ENCODE measurements at regions of chr3 and their contacts with region 1.

Region 1: DNA sequence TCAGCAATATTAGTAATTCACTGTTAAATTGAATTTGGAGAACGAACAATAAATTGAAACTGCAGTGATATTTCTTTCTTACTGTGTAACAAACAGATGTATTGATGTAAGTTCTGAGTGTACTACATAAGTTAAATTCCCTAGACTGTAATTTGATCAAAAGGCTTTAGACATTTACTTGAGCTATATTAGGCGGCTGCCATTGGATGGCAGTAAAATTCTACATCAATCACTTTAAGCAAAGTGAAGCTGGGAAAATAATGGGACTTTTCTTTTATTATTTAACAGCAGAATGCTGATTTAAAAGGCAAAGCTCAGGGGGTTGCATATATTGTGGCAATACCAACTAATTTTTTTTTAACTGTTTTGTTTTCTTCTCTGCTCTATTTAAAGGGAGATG is 212.6 kb upstream of the PLSCR5 start:
- DNase-seq: no peak
- ATAC-seq: no peak
- H3K4me3 ChIP-seq: no peak overlapping the region
- H3K27ac ChIP-seq: no peak overlapping the region
- H3K4me1 ChIP-seq: no peaks in the 10 kb centered on the region
- H3K27me3 ChIP-seq: no peaks in the 10 kb centered on the region
- CTCF ChIP-seq: peak in 2 of 5 experiments; percentile 33 to 41
- POLR2A ChIP-seq: no peak

Region 2: GRCh38 chr3:145639875-145640274 is 1177.8 kb before region 1 on chr3:
- in situ Hi-C with region 1: no loop called
- intact Hi-C with region 1: no loop called
- DNase-seq: no peak
- ATAC-seq: no peak
- H3K4me3 ChIP-seq: no peak overlapping the region
- H3K27ac ChIP-seq: no peak overlapping the region
- H3K4me1 ChIP-seq: no peaks in the 10 kb centered on the region
- H3K27me3 ChIP-seq: no peaks in the 10 kb centered on the region
- CTCF ChIP-seq: no peak
- POLR2A ChIP-seq: no peak

Region 3: GRCh38 chr3:146839733-146840375 is 22.1 kb after region 1 on chr3:
- in situ Hi-C with region 1: no loop called
- intact Hi-C with region 1: no loop called
- DNase-seq: no peak
- ATAC-seq: no peak
- H3K4me3 ChIP-seq: no peak overlapping the region
- H3K27ac ChIP-seq: no peak overlapping the region
- H3K4me1 ChIP-seq: no peaks in the 10 kb centered on the region
- H3K27me3 ChIP-seq: no peaks in the 10 kb centered on the region
- CTCF ChIP-seq: no peak
- POLR2A ChIP-seq: no peak

Region 4: DNA sequence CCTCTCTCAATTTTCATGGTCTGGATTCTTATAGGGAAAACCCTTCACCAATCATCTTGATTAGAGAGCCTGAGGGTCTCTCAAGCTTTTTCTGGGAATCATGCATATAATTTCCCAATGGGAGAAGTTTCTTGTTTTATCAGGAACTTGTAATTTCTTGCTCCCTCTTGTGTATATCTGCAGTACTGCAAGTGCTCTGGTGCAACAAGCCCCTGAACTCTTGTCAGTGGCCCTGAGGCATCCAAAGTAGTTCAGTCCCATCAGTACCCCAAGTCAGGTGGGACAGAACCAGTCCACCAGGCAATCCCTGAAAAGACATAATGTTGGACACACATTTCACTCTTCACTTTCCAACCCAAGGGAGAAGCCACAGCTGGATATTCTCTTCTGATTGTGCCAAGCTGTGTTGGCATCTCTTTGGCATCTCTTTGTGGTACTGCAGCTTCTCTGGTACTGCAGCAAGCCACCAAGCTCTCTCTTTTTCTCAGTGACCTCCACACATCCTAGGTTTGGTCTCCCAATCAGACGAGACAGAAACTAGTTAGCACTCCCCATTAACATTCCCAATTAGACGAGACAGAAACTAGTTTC is 374.2 kb after region 1 on chr3:
- in situ Hi-C with region 1: loop called in 2 of 4 experiments (anchors 5 to 25 kb)
- intact Hi-C with region 1: loop called (anchors 5 kb)
- DNase-seq: no peak
- ATAC-seq: no peak
- H3K4me3 ChIP-seq: no peak overlapping the region
- H3K27ac ChIP-seq: no peak overlapping the region
- H3K4me1 ChIP-seq: no peaks in the 10 kb centered on the region
- H3K27me3 ChIP-seq: no peaks in the 10 kb centered on the region
- CTCF ChIP-seq: peak; percentile 13 to 68 (median 53)
- POLR2A ChIP-seq: no peak